B cell (primary cell): ENCODE measurements at regions of chr9 and their contacts with region 1.

Region 1: GRCh38 chr9:137223078-137223970 is 1.3 kb upstream of the RNF208 start:
- DNase-seq: peak; percentile 99
- ATAC-seq: peak; percentile 92
- H3K4me3 ChIP-seq: peak overlapping the region; percentile 36 to 77 (median 71)
- H3K4me3 Mint-ChIP-seq: peak overlapping the region; percentile 86
- H3K27ac ChIP-seq: peak overlapping the region; percentile 79 to 91
- H3K27ac Mint-ChIP-seq: peak overlapping the region; percentile 82
- H3K4me1 ChIP-seq: peaks cover 13 to 32% of the 10 kb centered on the region in 2 donors
- H3K4me1 Mint-ChIP-seq: peaks cover 16% of the 10 kb centered on the region
- H3K27me3 ChIP-seq: peaks cover 0 to 12% (median 0%) of the 10 kb centered on the region in 4 experiments
- H3K27me3 Mint-ChIP-seq: peaks cover 4% of the 10 kb centered on the region
- CTCF ChIP-seq: no peak

Region 2: DNA sequence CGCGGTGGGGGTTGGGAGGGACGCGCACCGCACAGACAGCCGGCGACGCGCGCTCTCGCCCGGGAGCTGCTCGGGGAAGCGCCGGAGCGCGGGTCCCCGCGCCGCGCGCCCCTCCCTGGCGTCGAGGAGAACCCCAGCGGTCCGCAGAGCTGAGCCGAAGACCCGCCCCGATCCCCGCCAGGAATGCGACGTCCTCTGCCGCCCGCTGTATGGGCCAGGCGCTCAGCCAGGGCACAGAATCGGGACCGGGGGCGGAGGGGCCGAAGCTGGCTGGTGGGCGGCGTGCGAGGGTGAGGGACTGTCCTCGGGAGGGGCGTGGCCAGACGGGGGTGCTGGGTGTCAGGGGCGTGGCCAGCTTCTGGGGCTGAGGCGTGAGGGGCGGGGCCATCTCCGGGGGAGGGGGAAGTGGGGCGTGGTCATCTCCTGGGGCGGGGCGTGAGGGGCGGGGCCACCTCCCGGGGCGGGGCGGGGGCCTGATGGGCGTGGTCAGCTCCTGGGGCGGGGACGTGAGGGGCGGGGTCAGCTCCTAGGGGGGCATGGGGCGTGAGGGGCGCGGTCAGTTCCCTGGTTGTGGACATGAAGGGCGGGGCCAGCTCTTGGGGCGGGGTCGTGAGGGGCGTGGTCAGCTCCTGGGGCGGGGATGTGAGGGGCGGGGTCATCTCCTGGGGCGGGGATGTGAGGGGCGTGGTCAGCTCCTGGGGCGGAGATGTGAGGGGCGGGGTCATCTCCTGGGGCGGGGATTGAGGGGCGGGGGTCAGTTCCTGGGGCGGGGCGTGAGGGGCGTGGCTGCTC is 245.1 kb before region 1 on chr9:
- CTCF ChIA-PET with region 1: no interaction called
- POLR2A ChIA-PET with region 1: no interaction called
- intact Hi-C with region 1: no loop called
- DNase-seq: peak; percentile 68
- ATAC-seq: peak; percentile 63
- H3K4me3 ChIP-seq: peak overlapping the region in 3 of 5 experiments; percentile 2 to 29 (median 14)
- H3K4me3 Mint-ChIP-seq: no peak overlapping the region
- H3K27ac ChIP-seq: no peak overlapping the region
- H3K27ac Mint-ChIP-seq: no peak overlapping the region
- H3K4me1 ChIP-seq: peaks cover 3 to 5% of the 10 kb centered on the region in 2 donors
- H3K4me1 Mint-ChIP-seq: peaks cover 5% of the 10 kb centered on the region
- H3K27me3 ChIP-seq: peaks cover 0 to 59% (median 8%) of the 10 kb centered on the region in 4 experiments
- H3K27me3 Mint-ChIP-seq: peaks cover 12% of the 10 kb centered on the region
- CTCF ChIP-seq: no peak

Region 3: DNA sequence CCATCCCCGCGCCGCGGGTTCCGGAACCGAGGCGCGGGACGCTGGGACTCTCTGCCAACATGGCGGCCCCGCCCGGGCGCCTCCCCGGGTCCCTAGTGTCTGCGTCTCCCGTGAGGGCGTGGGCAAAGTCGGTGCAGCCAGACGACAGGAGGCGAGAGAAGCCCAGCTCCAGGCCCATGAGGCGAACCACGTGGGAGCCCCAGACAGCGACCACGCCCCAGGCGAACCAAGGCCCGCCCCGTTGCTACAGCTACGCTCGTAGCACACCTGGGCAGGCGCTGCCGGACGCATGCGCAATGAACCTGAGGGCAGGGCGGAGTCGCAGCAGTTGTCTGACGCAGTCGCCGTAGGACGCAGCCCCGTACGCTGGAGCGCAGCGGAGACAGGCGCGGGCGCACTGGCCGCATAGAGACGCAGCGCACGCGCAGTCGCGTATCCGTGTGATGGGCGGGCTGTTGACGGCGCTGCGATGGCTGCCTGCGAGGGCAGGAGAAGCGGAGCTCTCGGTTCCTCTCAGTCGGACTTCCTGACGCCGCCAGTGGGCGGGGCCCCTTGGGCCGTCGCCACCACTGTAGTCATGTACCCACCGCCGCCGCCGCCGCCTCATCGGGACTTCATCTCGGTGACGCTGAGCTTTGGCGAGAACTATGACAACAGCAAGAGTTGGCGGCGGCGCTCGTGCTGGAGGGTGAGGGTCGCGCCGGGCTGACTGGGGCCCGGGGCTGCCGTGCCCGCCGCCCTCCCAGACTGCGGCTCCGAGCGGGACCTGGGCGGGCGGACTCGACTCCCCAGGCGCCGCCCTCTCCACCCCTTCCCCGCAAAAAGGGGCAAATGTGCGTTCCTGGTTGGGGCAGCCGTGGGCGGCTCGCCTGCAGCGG is 136.6 kb before region 1 on chr9 and contains the start of gene MAN1B1:
- CTCF ChIA-PET with region 1: interaction called, 4 read pairs
- POLR2A ChIA-PET with region 1: no interaction called
- intact Hi-C with region 1: loop called (anchors 1 kb)
- DNase-seq: peak; percentile 100
- ATAC-seq: peak; percentile 79
- H3K4me3 ChIP-seq: peak within 1 kb of the TSS; percentile 42 to 83 (median 74)
- H3K4me3 Mint-ChIP-seq: peak within 1 kb of the TSS; percentile 97
- H3K27ac ChIP-seq: peak within 1 kb of the TSS; percentile 88 to 97
- H3K27ac Mint-ChIP-seq: peak within 1 kb of the TSS; percentile 98
- H3K4me1 ChIP-seq: peaks cover 18 to 41% of the 10 kb centered on the region in 2 donors
- H3K4me1 Mint-ChIP-seq: peaks cover 40% of the 10 kb centered on the region
- H3K27me3 ChIP-seq: no peaks in the 10 kb centered on the region
- H3K27me3 Mint-ChIP-seq: no peaks in the 10 kb centered on the region
- CTCF ChIP-seq: no peak
- total RNA-seq, gene MAN1B1: 68.4 and 80.9 TPM in 2 replicates

Region 4: DNA sequence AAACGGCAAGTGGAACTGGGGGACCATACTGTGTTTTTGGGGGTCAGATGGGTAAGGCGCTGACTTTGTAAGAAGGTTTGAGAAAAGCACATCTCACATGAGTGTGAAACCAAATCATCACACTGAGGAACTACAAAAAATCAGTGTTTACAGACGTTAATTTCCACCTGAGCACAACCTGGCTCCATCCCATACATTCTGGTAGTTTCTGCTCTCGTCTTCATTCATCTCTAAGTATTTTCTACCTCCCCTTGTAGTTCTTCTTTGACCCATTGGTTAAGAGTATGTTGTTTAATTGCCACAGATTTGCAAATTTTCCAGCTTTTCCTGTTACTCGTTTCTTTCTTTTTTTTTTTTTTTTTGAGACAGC is 99.9 kb before region 1 on chr9:
- CTCF ChIA-PET with region 1: interaction called, 15 read pairs
- POLR2A ChIA-PET with region 1: interaction called, 5 read pairs
- intact Hi-C with region 1: loop called (anchors 1 kb)
- DNase-seq: no peak
- ATAC-seq: no peak
- H3K4me3 ChIP-seq: peak overlapping the region in 1 of 5 experiments; percentile 1
- H3K4me3 Mint-ChIP-seq: peak overlapping the region; percentile 72
- H3K27ac ChIP-seq: peak overlapping the region in 1 of 2 donors; percentile 84
- H3K27ac Mint-ChIP-seq: peak overlapping the region; percentile 89
- H3K4me1 ChIP-seq: peaks cover 53 to 64% of the 10 kb centered on the region in 2 donors
- H3K4me1 Mint-ChIP-seq: peaks cover 54% of the 10 kb centered on the region
- H3K27me3 ChIP-seq: no peaks in the 10 kb centered on the region
- H3K27me3 Mint-ChIP-seq: no peaks in the 10 kb centered on the region
- CTCF ChIP-seq: no peak

Region 5: DNA sequence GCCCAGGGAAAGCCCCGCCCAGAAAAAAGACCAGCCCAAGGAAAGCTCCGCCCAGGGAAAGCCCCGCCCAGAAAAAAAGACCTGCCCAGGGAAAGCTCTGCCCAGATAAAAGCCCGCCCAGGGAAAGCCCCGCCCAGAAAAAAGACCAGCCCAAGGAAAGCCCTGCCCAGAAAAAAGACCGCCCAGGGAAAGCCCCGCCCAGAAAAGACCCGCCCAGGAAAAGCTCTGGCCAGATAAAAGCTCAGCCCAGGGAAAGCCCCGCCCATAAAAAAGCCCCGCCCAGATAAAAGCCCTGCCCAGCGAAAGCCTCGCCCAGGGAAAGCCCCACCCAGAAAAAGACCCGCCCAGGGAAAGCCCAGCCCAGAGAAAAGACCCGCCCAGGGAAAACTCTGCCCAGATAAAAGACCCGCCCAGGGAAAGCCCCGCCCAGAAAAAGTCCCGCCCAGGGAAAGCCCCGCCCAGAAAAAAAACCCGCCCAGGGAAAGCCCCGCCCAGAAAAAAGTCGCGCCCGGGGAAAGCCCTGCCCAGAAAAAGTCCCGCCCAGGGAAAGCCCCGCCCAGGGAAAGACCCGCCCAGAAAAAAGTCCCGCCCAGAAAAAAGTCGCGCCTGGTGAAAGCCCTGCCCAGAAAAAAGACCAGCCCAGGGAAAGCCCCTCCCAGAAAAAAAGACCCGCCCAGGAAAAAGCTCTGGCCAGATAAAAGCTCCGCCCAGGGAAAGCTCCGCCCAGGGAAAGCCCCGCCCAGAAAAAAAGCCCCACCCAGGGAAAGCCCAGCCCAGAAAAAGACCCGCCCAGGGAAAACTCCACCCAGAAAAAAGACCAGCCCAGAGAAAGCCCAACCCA is 72.5 kb before region 1 on chr9:
- CTCF ChIA-PET with region 1: no interaction called
- POLR2A ChIA-PET with region 1: no interaction called
- intact Hi-C with region 1: no loop called
- DNase-seq: peak; percentile 77
- ATAC-seq: peak; percentile 55
- H3K4me3 ChIP-seq: no peak overlapping the region
- H3K4me3 Mint-ChIP-seq: no peak overlapping the region
- H3K27ac ChIP-seq: peak overlapping the region; percentile 11 to 84
- H3K27ac Mint-ChIP-seq: peak overlapping the region; percentile 61
- H3K4me1 ChIP-seq: peaks cover 0 to 13% of the 10 kb centered on the region in 2 donors
- H3K4me1 Mint-ChIP-seq: peaks cover 9% of the 10 kb centered on the region
- H3K27me3 ChIP-seq: peaks cover 0 to 21% (median under 1%) of the 10 kb centered on the region in 4 experiments
- H3K27me3 Mint-ChIP-seq: peaks cover 17% of the 10 kb centered on the region
- CTCF ChIP-seq: no peak

Region 6: DNA sequence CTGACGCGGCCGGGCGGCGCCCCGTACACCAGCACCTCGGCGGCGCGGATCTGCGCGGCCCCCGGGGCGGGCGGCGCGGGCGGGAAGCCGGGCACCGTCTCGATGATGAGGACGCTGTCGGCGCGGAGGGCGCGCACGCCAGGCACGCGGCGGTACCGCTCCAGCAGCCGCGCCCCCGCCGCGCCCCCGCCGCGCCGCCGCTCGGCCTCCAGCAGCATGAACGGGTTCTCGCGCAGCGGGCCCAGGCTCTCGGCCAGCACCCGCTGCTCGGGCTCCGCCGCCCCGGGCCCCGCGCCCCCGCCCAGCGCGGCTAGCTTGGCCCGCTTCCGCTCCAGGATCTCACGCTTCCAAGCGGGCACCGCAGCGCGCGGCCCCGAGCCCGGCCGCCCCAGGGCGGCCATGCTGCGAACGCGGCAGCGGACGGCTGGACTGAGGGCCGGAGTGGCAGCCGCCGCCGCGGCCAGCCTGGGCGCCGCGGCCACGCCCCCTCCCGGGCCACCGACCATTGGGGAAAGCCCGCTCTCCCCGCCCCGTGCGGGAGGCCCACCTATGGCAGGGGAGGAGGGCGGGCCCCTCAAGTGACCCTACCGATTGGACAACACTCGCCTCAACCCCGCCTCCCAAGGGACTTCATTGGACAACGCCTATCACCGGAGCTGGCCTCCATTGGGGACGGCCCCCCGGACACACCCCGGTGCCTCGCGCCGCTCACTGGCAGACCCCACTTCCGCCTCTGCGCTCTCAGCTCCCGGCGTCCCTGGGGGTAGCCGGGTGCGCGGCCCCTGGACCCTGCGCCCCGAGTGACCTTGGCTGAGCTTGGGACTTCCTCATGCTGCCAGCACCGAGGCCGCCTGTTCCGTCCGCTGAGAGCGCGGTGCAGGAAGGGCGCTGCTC is 22.8 kb before region 1 on chr9 and contains the start of gene TPRN:
- CTCF ChIA-PET with region 1: interaction called, 7 read pairs
- POLR2A ChIA-PET with region 1: interaction called, 15 read pairs
- intact Hi-C with region 1: loop called (anchors 1 kb)
- DNase-seq: peak; percentile 99
- ATAC-seq: peak; percentile 95
- H3K4me3 ChIP-seq: peak within 1 kb of the TSS; percentile 12 to 80 (median 75)
- H3K4me3 Mint-ChIP-seq: peak within 1 kb of the TSS; percentile 88
- H3K27ac ChIP-seq: peak within 1 kb of the TSS; percentile 78 to 89
- H3K27ac Mint-ChIP-seq: peak within 1 kb of the TSS; percentile 90
- H3K4me1 ChIP-seq: peaks cover 31 to 41% of the 10 kb centered on the region in 2 donors
- H3K4me1 Mint-ChIP-seq: peaks cover 29% of the 10 kb centered on the region
- H3K27me3 ChIP-seq: peaks cover 0 to 6% (median 0%) of the 10 kb centered on the region in 4 experiments
- H3K27me3 Mint-ChIP-seq: no peaks in the 10 kb centered on the region
- CTCF ChIP-seq: no peak
- total RNA-seq, gene TPRN: 16.3 and 19.3 TPM in 2 replicates

Region 7: DNA sequence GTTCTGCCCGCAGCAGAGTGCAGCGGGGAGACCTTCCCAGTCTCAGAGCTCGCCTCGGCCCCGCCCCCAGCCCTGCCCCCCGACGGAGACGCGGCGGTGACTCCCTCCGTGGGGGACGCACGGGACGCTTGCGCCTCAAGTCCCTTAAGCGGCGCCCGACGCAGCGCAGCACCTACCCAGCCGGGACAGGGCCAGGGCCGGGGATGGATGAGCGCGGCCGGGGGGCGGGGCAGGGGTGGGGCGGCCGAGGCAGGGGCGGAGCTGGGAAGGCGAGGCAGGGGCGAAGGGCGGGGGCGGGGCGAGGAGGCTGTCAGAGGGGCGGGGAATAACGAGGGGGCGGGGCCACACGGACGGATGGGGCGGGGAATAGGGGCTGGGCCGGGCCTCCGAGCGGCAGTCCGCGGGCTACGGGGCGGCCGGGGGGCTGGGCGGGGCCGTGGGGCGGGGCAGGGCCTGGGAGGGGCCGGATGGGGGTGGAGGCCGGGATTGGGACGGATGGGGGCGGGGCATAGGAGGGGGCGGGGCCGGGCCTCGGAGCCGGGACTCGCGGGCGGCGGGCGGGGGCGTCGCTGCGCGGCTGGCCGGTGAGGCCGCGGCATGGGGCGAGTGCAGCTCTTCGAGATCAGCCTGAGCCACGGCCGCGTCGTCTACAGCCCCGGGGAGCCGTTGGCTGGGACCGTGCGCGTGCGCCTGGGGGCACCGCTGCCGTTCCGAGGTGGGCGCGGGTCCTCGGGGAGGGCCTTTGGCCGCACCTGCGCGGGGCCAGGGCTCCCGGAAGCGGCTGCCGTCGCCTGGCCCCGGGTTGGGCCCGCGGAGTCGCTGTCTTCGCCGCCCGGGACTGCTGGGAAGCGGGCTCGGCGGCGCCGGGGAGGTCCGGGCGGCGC is 382.0 kb after region 1 on chr9 and contains the start of gene ARRDC1:
- CTCF ChIA-PET with region 1: no interaction called
- POLR2A ChIA-PET with region 1: no interaction called
- intact Hi-C with region 1: loop called (anchors 5 kb)
- DNase-seq: peak; percentile 93
- ATAC-seq: peak; percentile 86
- H3K4me3 ChIP-seq: peak within 1 kb of the TSS; percentile 34 to 74 (median 60)
- H3K4me3 Mint-ChIP-seq: peak within 1 kb of the TSS; percentile 86
- H3K27ac ChIP-seq: peak within 1 kb of the TSS in 1 of 2 donors; percentile 61
- H3K27ac Mint-ChIP-seq: peak within 1 kb of the TSS; percentile 65
- H3K4me1 ChIP-seq: peaks cover 12 to 25% of the 10 kb centered on the region in 2 donors
- H3K4me1 Mint-ChIP-seq: peaks cover 21% of the 10 kb centered on the region
- H3K27me3 ChIP-seq: no peaks in the 10 kb centered on the region
- H3K27me3 Mint-ChIP-seq: no peaks in the 10 kb centered on the region
- CTCF ChIP-seq: no peak
- total RNA-seq, gene ARRDC1: 89.2 and 96.6 TPM in 2 replicates